ENCODE measurements at regions of chr1 and their contacts with region 1.

Region 1: GRCh38 chr1:21766210-21766609 is 16.7 kb downstream of the USP48 start:
- DNase-seq: no peak
- H3K4me3 ChIP-seq: no peak overlapping the region
- H3K27ac ChIP-seq: no peak overlapping the region
- H3K4me1 ChIP-seq: peaks cover 2 to 9% (median 6%) of the 10 kb centered on the region in 4 experiments
- H3K27me3 ChIP-seq: no peaks in the 10 kb centered on the region
- CTCF ChIP-seq: no peak
- EP300 ChIP-seq: no peak
- POLR2A ChIP-seq: no peak
- RAD21 ChIP-seq: no peak

Region 2: GRCh38 chr1:21782868-21783678 is 16.9 kb after region 1 on chr1 and contains the start of gene USP48:
- CTCF ChIA-PET with region 1: interaction called, 6 read pairs
- POLR2A ChIA-PET with region 1: interaction called, 26 read pairs
- DNase-seq: peak; percentile 92 to 99
- H3K4me3 ChIP-seq: peak within 1 kb of the TSS; percentile 78 to 84 (median 80)
- H3K27ac ChIP-seq: peak within 1 kb of the TSS; percentile 98
- H3K4me1 ChIP-seq: peaks cover 0 to 4% (median 1%) of the 10 kb centered on the region in 4 experiments; a peak in 3 of 7 replicates
- H3K27me3 ChIP-seq: no peaks in the 10 kb centered on the region
- CTCF ChIP-seq: no peak
- EP300 ChIP-seq: no peak
- POLR2A ChIP-seq: peak; percentile 98
- RAD21 ChIP-seq: no peak
- total RNA-seq, gene USP48: 81.5 and 83.5 TPM in 2 replicates